ENCODE measurements at regions of chr6 and their contacts with region 1.

Region 1: DNA sequence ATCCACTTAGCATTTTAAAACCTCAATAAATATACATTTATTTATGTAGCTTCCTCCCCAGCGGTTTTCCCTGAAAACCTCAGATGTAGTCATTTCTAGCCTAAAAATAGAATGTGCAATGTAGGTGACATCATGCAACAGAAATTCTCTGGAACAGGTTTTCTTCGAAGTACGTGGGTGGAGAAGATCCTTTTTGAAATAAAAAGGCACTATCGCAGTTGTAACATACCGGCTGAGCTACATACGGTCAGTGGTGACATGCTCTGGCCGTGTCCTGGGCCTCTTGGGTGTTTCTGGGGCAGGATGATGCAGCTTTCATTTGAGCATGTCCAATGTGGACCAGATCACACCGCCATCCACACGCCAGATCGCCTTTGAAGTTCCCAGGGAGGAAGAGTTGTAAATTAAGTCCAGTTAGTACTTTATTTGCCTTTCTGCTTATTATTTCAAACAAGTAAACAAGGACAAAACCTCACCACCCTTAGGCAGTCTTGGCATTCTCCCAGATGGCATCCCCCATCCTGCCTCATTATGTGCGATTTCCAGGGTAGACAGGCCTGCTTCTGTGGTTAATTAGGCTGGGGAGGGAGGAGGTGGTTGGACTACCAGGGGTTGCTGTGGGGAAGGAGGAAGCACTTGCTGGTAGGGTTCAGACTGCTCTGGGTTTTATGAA is 109.5 kb upstream of the CLDN20 start:
- DNase-seq: peak; percentile 62
- ATAC-seq: peak; percentile 61
- H3K4me3 Mint-ChIP-seq: peak overlapping the region; percentile 35
- H3K27ac Mint-ChIP-seq: peak overlapping the region; percentile 91
- H3K4me1 Mint-ChIP-seq: peaks cover 78% of the 10 kb centered on the region
- H3K27me3 Mint-ChIP-seq: peaks cover 3% of the 10 kb centered on the region

Region 2: DNA sequence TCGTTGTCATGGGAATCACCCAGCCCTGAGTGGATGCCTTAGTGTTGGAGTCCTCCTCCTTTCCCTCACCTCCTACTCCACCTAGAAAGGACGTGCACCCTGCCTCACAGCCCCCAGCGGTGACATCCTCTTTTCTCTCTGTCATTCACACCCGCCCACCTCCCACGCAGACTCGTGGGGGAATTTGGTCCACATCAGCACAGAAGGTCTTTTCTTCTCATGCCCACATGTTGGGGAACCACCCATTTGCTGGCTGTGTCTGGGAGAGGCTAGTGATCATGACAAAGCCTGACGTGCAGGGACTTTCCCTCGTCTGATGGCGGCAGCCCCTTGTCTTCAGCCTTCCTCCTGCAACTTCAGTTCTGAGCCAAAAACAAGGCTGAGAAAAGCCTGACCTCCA is 547.8 kb before region 1 on chr6:
- CTCF ChIA-PET with region 1: no interaction called
- POLR2A ChIA-PET with region 1: no interaction called
- intact Hi-C with region 1: loop called in 1 of 2 experiments (anchors 10 kb)
- DNase-seq: peak; percentile 96
- ATAC-seq: peak; percentile 92
- H3K4me3 Mint-ChIP-seq: peak overlapping the region; percentile 13
- H3K27ac Mint-ChIP-seq: peak overlapping the region; percentile 84
- H3K4me1 Mint-ChIP-seq: peaks cover 45% of the 10 kb centered on the region
- H3K27me3 Mint-ChIP-seq: peaks cover 4% of the 10 kb centered on the region

Region 3: GRCh38 chr6:155050311-155050710 is 104.0 kb before region 1 on chr6:
- CTCF ChIA-PET with region 1: interaction called, 3 read pairs
- POLR2A ChIA-PET with region 1: interaction called, 6 read pairs
- intact Hi-C with region 1: loop called (anchors 1 kb)
- DNase-seq: peak; percentile 66
- ATAC-seq: peak; percentile 98
- H3K4me3 Mint-ChIP-seq: peak overlapping the region; percentile 37
- H3K27ac Mint-ChIP-seq: peak overlapping the region; percentile 91
- H3K4me1 Mint-ChIP-seq: peaks cover 30% of the 10 kb centered on the region
- H3K27me3 Mint-ChIP-seq: peaks cover 3% of the 10 kb centered on the region

Region 4: GRCh38 chr6:155130161-155130853 is 24.0 kb before region 1 on chr6:
- CTCF ChIA-PET with region 1: interaction called, 5 read pairs
- POLR2A ChIA-PET with region 1: no interaction called
- intact Hi-C with region 1: loop called (anchors 1 to 2 kb)
- DNase-seq: peak; percentile 45
- ATAC-seq: peak; percentile 70
- H3K4me3 Mint-ChIP-seq: no peak overlapping the region
- H3K27ac Mint-ChIP-seq: peak overlapping the region; percentile 83
- H3K4me1 Mint-ChIP-seq: peaks cover 36% of the 10 kb centered on the region
- H3K27me3 Mint-ChIP-seq: no peaks in the 10 kb centered on the region

Region 5: DNA sequence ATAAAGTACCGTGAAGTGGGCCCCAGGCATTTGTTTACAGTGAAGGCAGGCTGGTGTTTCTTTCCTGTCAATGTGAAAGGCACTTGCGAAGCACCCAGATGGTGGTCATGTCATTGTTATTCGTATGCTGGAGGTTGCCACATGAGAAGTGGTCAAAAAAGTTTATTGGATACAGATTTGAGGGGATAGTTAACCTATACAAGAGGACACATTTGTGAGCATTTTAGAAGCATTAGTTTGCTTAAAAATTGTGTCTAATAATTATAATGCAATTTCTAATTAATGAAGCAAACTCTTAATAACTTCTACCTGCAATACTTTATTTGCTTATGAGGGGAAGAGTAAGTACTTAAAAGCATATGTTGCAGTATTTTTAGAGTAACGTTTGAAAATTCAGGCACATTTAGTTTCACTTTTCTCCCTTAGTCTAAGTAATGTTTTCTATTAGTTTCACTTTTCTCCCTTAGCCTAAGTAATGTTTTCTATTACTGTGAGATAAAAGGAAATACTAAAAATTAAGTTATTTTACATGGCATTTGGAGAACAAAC is 11.2 kb before region 1 on chr6:
- CTCF ChIA-PET with region 1: no interaction called
- POLR2A ChIA-PET with region 1: no interaction called
- intact Hi-C with region 1: no loop called
- DNase-seq: no peak
- ATAC-seq: peak; percentile 30
- H3K4me3 Mint-ChIP-seq: peak overlapping the region; percentile 65
- H3K27ac Mint-ChIP-seq: peak overlapping the region; percentile 92
- H3K4me1 Mint-ChIP-seq: peaks cover 32% of the 10 kb centered on the region
- H3K27me3 Mint-ChIP-seq: no peaks in the 10 kb centered on the region